Activated B cell treated with CpG ODN at 0.5 μM for 24 hours (primary cell): ENCODE measurements at regions of chr17 and their contacts with region 1.

Region 1: DNA sequence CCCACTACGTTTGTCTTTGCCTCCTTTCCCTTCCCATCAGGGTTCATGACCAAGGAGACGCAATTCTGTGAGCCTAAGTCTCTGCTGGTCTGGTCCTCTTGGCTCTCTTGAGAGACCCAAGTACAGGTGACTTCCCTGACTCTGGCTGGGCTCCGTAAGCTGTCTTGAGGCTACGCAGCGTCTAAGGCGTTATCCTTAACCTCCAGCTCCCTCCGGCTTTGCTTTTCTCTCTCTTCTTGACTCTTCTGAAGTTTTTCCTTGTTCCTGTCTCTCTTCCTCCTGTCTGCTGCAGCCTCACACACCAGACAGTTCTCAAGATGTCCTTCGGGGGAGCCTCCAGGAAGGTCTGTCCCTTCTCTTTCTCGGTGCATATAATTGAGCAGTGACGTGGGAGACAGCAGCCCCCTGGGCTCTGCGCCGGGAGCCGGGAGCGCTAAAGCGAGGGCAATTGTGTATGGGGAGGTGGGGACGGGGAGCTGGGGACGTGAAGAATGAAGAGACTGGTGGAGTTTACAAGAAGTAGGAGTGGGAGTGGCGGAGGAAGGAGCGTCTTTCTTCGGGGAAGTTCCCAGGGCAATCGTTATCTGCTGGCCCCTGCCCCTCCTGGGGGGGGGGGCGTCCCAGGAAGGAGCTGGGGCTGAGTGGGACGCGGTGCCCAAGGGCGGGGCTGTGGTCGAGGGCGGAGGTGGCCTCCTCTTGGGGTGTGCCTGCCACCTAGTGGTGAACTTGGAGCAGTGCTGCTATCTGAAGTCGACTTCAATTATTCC is 6.9 kb upstream of the PIRT start:
- DNase-seq: peak; percentile 44
- ATAC-seq: peak; percentile 94
- H3K4me3 Mint-ChIP-seq: peak overlapping the region; percentile 81
- H3K27ac Mint-ChIP-seq: no peak overlapping the region
- H3K4me1 Mint-ChIP-seq: peaks cover 9% of the 10 kb centered on the region
- H3K27me3 Mint-ChIP-seq: peaks cover 16% of the 10 kb centered on the region
- CTCF ChIP-seq: peak; percentile 57

Region 2: GRCh38 chr17:9924735-9925191 is 920.0 kb before region 1 on chr17:
- CTCF ChIA-PET with region 1: no interaction called
- POLR2A ChIA-PET with region 1: no interaction called
- intact Hi-C with region 1: loop called (anchors 1 kb)
- DNase-seq: peak; percentile 31
- ATAC-seq: peak; percentile 77
- H3K4me3 Mint-ChIP-seq: no peak overlapping the region
- H3K27ac Mint-ChIP-seq: no peak overlapping the region
- H3K4me1 Mint-ChIP-seq: peaks cover 5% of the 10 kb centered on the region
- H3K27me3 Mint-ChIP-seq: no peaks in the 10 kb centered on the region
- CTCF ChIP-seq: peak; percentile 87

Region 3: GRCh38 chr17:10631048-10631700 is 213.6 kb before region 1 on chr17:
- CTCF ChIA-PET with region 1: interaction called, 10 read pairs
- POLR2A ChIA-PET with region 1: no interaction called
- intact Hi-C with region 1: loop called (anchors 1 kb)
- DNase-seq: no peak
- ATAC-seq: no peak
- H3K4me3 Mint-ChIP-seq: no peak overlapping the region
- H3K27ac Mint-ChIP-seq: no peak overlapping the region
- H3K4me1 Mint-ChIP-seq: peaks cover 27% of the 10 kb centered on the region
- H3K27me3 Mint-ChIP-seq: no peaks in the 10 kb centered on the region
- CTCF ChIP-seq: peak; percentile 63

Region 4: GRCh38 chr17:10646392-10646990 is 198.3 kb before region 1 on chr17:
- CTCF ChIA-PET with region 1: interaction called, 69 read pairs
- POLR2A ChIA-PET with region 1: no interaction called
- intact Hi-C with region 1: loop called (anchors 1 kb)
- DNase-seq: peak; percentile 56
- ATAC-seq: peak; percentile 65
- H3K4me3 Mint-ChIP-seq: no peak overlapping the region
- H3K27ac Mint-ChIP-seq: no peak overlapping the region
- H3K4me1 Mint-ChIP-seq: peaks cover 2% of the 10 kb centered on the region
- H3K27me3 Mint-ChIP-seq: no peaks in the 10 kb centered on the region
- CTCF ChIP-seq: peak; percentile 26

Region 5: GRCh38 chr17:10697092-10698081 is 147.4 kb before region 1 on chr17 and contains the starts of genes ADPRM and SCO1:
- CTCF ChIA-PET with region 1: no interaction called
- POLR2A ChIA-PET with region 1: no interaction called
- intact Hi-C with region 1: loop called (anchors 1 kb)
- DNase-seq: peak; percentile 85
- ATAC-seq: peak; percentile 97
- H3K4me3 Mint-ChIP-seq: peak within 1 kb of the TSS; percentile 92
- H3K27ac Mint-ChIP-seq: peak within 1 kb of the TSS; percentile 92
- H3K4me1 Mint-ChIP-seq: peaks cover 51% of the 10 kb centered on the region
- H3K27me3 Mint-ChIP-seq: no peaks in the 10 kb centered on the region
- CTCF ChIP-seq: no peak
- total RNA-seq, gene ADPRM: 14.1 and 14.8 TPM in 2 replicates
- total RNA-seq, gene SCO1: 27.9 and 33.3 TPM in 2 replicates

Region 6: GRCh38 chr17:10754109-10754508 is 90.7 kb before region 1 on chr17:
- CTCF ChIA-PET with region 1: no interaction called
- POLR2A ChIA-PET with region 1: no interaction called
- intact Hi-C with region 1: loop called (anchors 10 kb)
- DNase-seq: no peak
- ATAC-seq: no peak
- H3K4me3 Mint-ChIP-seq: no peak overlapping the region
- H3K27ac Mint-ChIP-seq: no peak overlapping the region
- H3K4me1 Mint-ChIP-seq: no peaks in the 10 kb centered on the region
- H3K27me3 Mint-ChIP-seq: no peaks in the 10 kb centered on the region
- CTCF ChIP-seq: no peak

Region 7: DNA sequence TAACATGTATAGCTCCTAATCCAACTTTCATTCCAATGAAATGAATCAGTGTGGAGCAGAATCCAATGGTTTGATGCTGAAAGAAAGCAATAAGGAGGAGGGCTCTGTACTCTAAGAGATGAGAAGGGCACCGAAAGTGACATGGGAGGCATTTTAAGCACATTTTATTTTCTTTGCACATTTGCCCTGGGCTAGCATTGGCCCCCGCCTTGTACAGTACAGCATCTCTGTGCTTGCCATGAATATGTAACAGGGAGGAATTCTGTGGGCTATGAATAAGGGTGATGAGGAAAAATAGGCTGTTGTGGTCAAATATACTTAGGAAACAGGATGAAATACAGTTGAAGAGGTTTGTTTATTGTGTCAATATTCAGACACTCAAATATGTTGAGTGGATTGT is 351.0 kb after region 1 on chr17:
- CTCF ChIA-PET with region 1: no interaction called
- POLR2A ChIA-PET with region 1: no interaction called
- intact Hi-C with region 1: no loop called
- DNase-seq: no peak
- ATAC-seq: no peak
- H3K4me3 Mint-ChIP-seq: no peak overlapping the region
- H3K27ac Mint-ChIP-seq: no peak overlapping the region
- H3K4me1 Mint-ChIP-seq: no peaks in the 10 kb centered on the region
- H3K27me3 Mint-ChIP-seq: no peaks in the 10 kb centered on the region
- CTCF ChIP-seq: no peak